Motor neuron (in vitro differentiated cells): ENCODE measurements at regions of chr7 and their contacts with region 1.

Region 1: DNA sequence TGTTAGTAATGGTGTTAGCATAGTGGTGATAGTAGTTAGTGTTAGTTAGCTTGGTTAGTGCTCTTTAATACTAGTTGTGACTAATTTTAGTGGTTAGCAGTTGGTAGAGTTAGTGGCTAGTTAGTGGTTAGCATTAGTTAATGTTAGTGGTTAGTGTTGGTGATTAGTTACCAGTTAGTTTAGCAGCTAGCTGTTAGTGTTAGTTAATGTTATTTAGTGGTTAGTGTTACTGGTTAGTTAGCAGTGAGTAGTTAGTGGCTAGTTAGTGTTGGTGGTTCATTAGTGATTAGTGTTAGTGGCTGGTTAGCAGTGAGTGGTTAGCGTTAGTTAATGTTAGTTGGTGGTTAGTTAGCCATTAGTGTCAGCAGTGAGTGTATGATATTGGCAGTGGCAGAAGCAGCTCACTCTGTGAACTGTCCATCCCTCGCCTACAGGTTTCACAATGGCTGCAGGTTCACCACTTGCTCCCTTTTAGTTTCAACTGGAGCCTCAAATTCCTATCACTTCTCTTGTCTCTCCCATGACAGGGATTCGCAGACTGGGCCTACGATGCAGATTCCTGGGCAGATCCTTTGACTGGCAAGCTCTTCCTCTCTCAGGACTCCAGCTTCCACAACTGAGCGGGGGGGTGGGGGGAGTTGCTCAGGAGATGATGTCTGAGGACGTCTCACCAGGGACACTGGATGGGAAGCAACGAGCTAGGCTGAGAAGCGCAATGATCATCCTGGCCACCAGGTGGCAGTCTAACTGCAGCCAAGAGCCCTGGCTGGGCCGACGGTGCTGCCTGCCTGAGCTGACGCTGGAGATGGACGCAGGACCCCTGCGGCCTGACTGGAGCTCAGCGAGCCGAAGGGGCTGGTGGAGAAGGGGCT is 19.5 kb downstream of the GHRHR start:
- ATAC-seq: peak; percentile 59 to 97 (median 80)
- H3K4me3 ChIP-seq: peak overlapping the region in 2 of 5 donors; percentile 14 to 15
- H3K27ac ChIP-seq: no peak overlapping the region
- H3K4me1 ChIP-seq: peaks cover 25 to 35% of the 10 kb centered on the region in 2 donors

Region 2: DNA sequence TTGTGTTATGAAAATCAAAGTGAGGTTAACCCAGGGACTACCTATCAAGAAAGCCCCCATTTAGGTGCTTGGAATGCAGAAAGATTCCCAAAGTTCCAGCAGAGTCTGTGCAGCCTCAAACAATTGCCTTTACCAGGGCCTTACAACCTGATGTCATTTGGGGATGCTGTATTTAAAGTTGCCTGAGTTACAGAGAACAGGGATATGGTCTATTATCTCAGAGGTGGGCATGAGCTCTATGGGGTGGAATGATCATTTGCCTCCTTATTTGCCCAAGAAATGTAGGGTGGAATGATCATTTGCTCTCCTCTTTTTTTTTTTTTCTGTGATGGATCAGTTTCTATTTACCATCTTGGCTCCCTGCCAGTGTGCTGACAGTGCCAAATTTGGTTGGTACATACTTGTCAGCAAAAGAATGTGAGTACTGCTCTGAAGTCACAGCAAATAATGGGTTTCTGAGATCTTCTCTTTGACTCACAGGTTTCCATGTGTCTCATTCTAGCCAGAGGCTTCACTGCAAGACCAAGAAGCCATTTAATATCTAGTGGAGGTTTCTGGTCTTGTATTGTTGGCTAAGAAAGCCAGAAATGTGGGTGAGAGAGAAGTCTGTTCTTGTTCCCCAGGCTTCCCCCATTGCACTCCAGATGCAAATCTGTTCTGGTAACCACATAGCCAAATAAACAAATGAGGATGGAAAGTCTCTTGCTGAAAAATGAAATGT is 744.4 kb before region 1 on chr7:
- in situ Hi-C with region 1: no loop called
- ATAC-seq: peak in 6 of 8 experiments; percentile 32 to 95 (median 72)
- H3K4me3 ChIP-seq: no peak overlapping the region
- H3K27ac ChIP-seq: no peak overlapping the region
- H3K4me1 ChIP-seq: peaks cover 0 to 9% of the 10 kb centered on the region in 2 donors

Region 3: DNA sequence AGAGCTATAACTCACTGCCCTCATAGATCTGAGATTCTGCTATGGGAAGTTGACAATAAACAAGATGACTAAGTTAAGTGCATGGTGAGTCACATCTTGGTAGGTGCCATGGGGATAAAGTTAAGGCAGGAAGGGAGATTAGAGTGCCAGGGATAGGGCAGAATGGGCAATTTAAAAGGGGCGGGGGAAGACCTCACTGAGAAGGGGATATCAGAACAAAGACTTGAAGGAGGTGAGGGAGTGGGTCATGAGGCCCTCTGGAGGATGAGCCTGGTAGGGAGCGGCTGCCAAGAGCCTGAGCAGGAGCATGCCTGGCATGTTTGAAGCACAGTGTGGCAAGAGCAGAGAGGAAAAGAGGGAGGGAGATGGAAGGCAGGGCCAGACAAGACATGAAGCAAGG is 266.1 kb before region 1 on chr7:
- in situ Hi-C with region 1: no loop called
- ATAC-seq: no peak
- H3K4me3 ChIP-seq: no peak overlapping the region
- H3K27ac ChIP-seq: no peak overlapping the region
- H3K4me1 ChIP-seq: no peaks in the 10 kb centered on the region

Region 4: GRCh38 chr7:31114593-31115343 is 131.5 kb after region 1 on chr7:
- in situ Hi-C with region 1: loop called in 2 of 9 experiments (anchors 10 to 25 kb)
- ATAC-seq: peak in 4 of 8 experiments; percentile 51 to 74 (median 60)
- H3K4me3 ChIP-seq: no peak overlapping the region
- H3K27ac ChIP-seq: no peak overlapping the region
- H3K4me1 ChIP-seq: no peaks in the 10 kb centered on the region

Region 5: GRCh38 chr7:31122649-31123058 is 139.4 kb after region 1 on chr7:
- in situ Hi-C with region 1: loop called (anchors 5 to 25 kb)
- ATAC-seq: peak; percentile 69 to 92 (median 80)
- H3K4me3 ChIP-seq: no peak overlapping the region
- H3K27ac ChIP-seq: no peak overlapping the region
- H3K4me1 ChIP-seq: no peaks in the 10 kb centered on the region